Psoas muscle (tissue), 8 donors: ENCODE measurements at regions of chr4 and their contacts with region 1.

Region 1: DNA sequence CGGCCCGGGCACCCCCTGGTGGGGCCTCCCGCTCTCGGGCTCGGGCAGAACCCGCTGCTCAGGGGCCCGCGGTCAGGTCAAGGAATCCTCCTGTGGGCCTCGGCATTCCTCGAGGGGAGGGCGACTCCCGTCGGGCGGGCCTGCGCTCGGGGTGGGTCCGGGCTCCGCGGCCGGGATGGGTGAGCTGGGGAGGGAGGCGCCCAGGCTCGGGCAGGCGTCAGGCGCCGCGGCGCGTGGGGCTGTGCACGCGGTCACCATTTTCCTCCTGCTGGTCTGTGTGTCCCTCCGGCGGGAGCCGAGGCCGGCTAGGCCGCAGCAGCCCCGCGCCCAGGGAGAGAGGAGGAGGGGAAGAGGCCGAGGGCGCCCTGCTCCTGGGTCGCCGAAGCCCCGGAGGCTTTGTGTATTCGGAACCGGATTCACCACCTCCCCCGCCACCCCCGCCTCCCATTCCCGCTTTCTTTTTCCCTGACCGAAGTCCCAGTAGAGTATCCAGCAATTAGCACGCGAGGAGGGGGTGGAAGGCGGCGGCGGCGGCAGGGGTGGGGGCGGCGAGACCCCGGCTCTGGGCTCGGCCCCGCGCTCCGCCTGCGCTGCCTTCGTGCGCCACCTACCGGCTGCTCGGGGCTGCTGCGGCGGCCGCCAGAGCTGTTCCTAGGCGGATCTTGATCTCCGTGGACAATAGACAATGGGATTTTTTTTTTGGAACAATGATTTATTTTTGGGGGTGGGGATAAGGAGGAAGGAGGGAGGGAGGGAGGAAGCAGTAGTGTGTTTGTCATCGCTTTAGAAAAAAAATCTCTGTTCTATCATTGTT is 99.0 kb upstream of the MAML3 start:
- DNase-seq: peak; percentile 78 to 83
- ATAC-seq: peak; percentile 82 to 88 (median 86)
- H3K4me3 ChIP-seq: peak overlapping the region; percentile 85
- H3K27ac ChIP-seq: peak overlapping the region; percentile 89
- H3K4me1 ChIP-seq: peaks cover 16% of the 10 kb centered on the region
- H3K27me3 ChIP-seq: no peaks in the 10 kb centered on the region
- CTCF ChIP-seq: peak; percentile 98

Region 2: GRCh38 chr4:140012688-140013486 is 240.1 kb before region 1 on chr4:
- intact Hi-C with region 1: loop called (anchors 2 to 5 kb)
- DNase-seq: peak; percentile 33 to 60
- ATAC-seq: peak; percentile 79 to 95 (median 84)
- H3K4me3 ChIP-seq: peak overlapping the region; percentile 12
- H3K27ac ChIP-seq: no peak overlapping the region
- H3K4me1 ChIP-seq: no peaks in the 10 kb centered on the region
- H3K27me3 ChIP-seq: no peaks in the 10 kb centered on the region
- CTCF ChIP-seq: peak; percentile 50

Region 3: DNA sequence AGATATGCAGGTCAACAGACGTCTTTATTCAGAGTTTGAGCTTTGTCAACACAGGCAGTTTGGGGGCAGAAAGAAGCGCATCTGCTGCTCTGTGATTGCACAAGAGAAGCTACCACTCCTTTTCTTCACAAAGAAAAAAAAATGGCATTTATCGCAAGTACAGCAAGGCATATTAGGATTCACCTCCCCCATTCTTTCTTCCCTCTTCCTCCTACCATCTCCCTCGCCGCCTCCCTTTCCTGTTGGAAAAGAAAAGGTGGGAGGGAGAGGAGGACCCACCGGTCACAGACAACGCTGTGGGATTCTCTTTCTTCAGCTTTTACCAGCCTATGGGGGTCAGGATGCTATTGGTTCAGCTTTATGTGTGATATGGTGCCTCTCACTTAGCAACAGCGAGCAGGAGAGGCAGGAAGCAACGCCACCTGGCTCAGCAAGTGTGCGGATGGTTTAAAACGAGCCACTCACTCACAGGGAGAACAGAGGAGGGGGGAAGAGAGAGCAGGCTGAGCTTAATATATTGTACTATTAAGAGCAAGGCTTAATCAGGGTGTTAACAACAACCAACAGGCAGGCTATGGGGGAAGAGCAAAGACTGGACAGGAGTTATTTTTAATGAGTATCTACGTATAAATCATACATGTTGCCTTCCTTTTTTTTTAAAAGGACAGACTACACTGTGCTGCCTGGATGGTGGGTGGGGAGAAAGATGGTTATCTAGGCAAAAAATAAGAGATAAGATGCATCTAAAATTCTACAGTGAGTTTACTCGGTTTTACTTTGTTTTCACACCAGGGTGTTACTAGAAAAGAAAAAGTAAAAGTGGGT is 203.7 kb before region 1 on chr4:
- intact Hi-C with region 1: loop called in 1 of 2 experiments (anchors 2 kb)
- DNase-seq: peak in 1 of 2 donors; percentile 21
- ATAC-seq: peak; percentile 46 to 63 (median 58)
- H3K4me3 ChIP-seq: peak overlapping the region; percentile 54
- H3K27ac ChIP-seq: peak overlapping the region; percentile 75
- H3K4me1 ChIP-seq: peaks cover 47% of the 10 kb centered on the region
- H3K27me3 ChIP-seq: no peaks in the 10 kb centered on the region
- CTCF ChIP-seq: no peak

Region 4: DNA sequence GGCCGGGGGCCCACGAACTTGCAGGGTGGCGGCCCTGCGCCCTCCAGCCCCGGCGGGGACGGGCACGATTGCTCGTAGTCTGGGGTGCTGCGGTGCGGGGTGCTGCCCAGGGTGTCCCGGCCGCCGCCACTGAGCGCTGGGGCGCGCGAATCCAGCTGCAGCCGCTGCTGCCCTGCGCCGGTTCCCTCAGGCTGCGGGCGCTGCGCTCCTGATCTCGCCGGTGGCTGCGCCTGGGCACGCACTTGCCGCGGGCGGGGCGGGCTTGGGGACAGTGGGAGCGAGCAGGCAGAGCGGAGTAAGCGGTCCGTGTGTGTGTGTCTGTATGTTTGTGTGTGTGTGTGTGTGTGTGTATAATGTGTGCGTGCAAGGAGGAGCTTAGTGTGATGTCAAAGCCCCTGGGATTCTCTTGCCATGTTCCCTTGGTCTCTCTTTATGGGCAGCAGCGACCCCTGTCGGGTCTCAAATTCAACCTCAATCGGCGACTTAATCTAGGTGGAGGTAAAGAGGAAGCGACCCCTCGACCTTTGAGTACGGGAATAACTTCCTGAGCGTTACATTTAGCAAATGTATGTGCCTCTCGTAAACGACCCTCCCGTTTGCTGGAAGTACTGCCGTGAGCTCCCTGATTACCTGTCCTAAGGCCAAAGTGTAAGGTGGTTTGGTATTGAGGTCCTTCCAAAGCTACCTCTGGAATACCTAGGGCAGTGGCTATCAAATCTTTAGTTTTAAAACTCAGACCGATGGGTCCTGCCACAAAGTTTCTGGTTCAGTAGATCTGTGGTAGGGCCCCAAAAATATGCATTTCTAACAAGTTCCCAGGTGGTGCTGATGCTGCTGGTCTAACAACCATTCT is 880.4 kb after region 1 on chr4 and contains the start of gene RNF150:
- intact Hi-C with region 1: no loop called
- DNase-seq: peak; percentile 69 to 85
- ATAC-seq: peak; percentile 81 to 88 (median 85)
- H3K4me3 ChIP-seq: peak within 1 kb of the TSS; percentile 93
- H3K27ac ChIP-seq: peak within 1 kb of the TSS; percentile 76
- H3K4me1 ChIP-seq: peaks cover 23% of the 10 kb centered on the region
- H3K27me3 ChIP-seq: no peaks in the 10 kb centered on the region
- CTCF ChIP-seq: peak; percentile 75
- total RNA-seq, gene RNF150: 3.2 to 12.6 (median 3.8) TPM